OCI-LY7 (cell line): ENCODE measurements at regions of chr13 and their contacts with region 1.

Region 1: GRCh38 chr13:26377038-26377437 is 123.1 kb downstream of the CDK8 start:
- DNase-seq: peak; percentile 18
- H3K4me3 ChIP-seq: no peak overlapping the region
- H3K27ac ChIP-seq: no peak overlapping the region
- H3K4me1 ChIP-seq: no peaks in the 10 kb centered on the region
- CTCF ChIP-seq: peak; percentile 65

Region 2: DNA sequence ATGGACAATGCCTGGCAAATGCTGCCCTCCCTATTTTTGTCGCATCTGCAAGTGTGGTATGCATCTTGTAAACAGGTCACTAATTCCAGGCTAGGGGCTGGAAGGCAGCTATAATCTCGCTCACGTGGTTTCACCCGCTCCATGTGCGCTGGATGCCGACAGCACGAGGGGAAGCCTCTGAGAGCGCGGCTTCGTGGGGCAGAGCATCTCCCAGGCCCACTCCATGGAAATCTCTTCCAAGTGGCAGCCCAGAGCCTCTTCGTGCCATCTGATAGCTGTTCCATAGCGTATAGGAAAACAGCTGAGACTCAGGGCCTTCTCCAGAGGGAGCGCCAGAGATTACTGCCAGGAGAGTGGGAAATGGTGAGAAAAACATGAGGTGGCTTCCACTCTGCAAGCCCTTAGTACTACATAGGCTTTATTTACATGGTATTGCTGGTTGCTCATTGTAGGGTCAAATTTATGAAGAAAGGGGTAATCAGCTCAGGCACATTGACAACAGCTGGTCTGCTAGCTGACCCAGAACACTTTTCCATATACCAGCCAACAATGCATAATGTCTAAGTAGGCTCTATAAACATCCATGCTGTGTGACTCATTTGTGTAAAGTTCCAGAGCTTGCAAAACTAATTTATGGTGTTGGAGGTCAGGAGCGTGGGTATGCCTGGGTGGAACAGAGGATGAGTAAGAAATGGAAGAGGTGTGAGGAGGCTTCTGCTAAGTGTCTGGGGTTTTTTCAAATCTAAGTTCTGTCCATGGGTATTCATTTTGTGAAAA is 490.4 kb before region 1 on chr13:
- CTCF ChIA-PET with region 1: no interaction called
- POLR2A ChIA-PET with region 1: no interaction called
- intact Hi-C with region 1: no loop called
- DNase-seq: no peak
- H3K4me3 ChIP-seq: no peak overlapping the region
- H3K27ac ChIP-seq: no peak overlapping the region
- H3K4me1 ChIP-seq: no peaks in the 10 kb centered on the region
- CTCF ChIP-seq: no peak

Region 3: GRCh38 chr13:26390203-26390602 is 13.2 kb after region 1 on chr13:
- CTCF ChIA-PET with region 1: no interaction called
- POLR2A ChIA-PET with region 1: interaction called, 10 read pairs
- intact Hi-C with region 1: no loop called
- DNase-seq: no peak
- H3K4me3 ChIP-seq: no peak overlapping the region
- H3K27ac ChIP-seq: no peak overlapping the region
- H3K4me1 ChIP-seq: no peaks in the 10 kb centered on the region
- CTCF ChIP-seq: no peak

Region 4: DNA sequence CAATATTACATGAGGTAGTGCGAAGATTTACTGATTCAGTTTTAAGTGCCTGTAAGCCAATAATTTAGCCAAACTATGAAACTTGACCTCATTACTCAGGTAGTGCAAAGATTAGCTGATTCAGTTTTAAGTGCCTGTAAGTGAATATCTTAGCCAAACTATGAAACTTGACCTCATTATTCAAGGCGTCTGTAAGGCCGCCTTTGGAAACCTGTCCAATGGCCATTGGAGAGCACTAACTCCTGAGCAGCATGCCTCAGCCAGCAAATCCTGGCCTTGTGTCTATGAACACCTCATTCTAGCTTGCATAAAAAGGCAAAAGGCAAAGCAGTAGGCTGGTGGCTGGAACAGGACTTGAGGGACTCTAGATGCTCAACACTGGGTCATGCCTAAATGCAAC is 510.6 kb after region 1 on chr13:
- CTCF ChIA-PET with region 1: no interaction called
- POLR2A ChIA-PET with region 1: no interaction called
- intact Hi-C with region 1: no loop called
- DNase-seq: no peak
- H3K4me3 ChIP-seq: no peak overlapping the region
- H3K27ac ChIP-seq: no peak overlapping the region
- H3K4me1 ChIP-seq: no peaks in the 10 kb centered on the region
- CTCF ChIP-seq: no peak